Activated CD8-positive, alpha-beta T cell treated with anti-CD3 and anti-CD28 coated beads for 36 hours (primary cell): ENCODE measurements at regions of chr1 and their contacts with region 1.

Region 1: DNA sequence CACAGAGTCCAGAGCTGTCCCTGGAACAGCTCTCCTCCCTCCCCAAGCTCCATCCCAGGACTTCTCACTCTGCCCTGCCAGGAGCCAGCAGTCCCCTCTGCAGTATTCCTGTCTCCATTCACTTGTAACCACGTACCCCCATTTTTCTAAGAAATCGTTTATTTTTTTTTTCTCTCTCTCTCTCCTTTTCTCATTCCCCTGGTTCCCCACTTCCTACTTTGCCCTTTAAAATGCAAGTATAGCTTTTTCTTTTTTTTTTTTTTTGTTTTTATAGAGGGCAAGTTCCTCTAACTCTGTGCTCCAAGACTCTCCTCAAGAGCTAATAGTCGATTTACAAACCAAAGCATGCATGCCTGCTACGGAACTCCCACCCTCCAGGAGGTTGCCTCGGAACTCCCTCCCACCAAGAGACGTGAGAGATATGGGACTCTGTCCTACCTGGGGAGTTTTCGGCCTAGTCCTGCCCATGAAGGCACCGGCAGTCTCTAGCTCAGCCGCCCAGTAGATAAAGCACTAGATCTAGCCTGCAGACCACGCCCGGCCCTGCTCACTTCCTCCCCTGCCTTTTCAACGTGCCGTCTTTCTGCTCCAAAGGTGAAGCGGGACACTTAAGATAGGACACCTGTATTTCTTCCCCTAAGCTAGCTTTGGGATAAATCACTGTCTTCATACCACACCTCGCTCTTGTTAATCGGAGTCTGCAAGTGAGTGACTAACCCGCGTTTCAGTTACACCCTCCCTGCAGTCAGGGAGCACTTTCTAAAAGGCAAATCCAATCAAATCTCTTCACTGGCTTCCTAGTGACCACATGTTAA is 27.7 kb downstream of the TNFRSF9 start:
- DNase-seq: no peak
- ATAC-seq: peak; percentile 17
- H3K4me3 Mint-ChIP-seq: peak overlapping the region; percentile 56
- H3K27ac Mint-ChIP-seq: peak overlapping the region; percentile 66
- H3K4me1 Mint-ChIP-seq: peaks cover 42% of the 10 kb centered on the region
- H3K27me3 Mint-ChIP-seq: no peaks in the 10 kb centered on the region
- CTCF ChIP-seq: no peak

Region 2: DNA sequence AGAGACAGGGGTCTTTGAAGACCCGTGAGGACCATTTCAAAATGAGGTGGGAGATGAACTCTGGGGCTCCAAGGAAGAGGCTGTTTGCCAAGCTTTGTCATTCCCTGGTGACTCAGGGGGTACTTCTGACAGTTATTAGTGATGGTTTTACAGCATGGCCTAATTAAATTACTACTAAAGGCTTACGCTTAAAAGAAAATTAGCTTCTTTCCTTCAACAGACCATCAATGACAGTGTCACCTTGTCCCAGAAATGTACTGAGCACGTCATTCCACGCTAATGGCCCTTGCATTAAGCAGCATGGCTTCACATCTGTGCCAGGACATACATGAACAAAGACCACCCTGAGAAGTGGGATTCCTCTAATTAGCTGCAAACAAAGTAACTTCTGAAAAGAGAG is 55.0 kb before region 1 on chr1:
- CTCF ChIA-PET with region 1: no interaction called
- POLR2A ChIA-PET with region 1: no interaction called
- intact Hi-C with region 1: no loop called
- DNase-seq: no peak
- ATAC-seq: no peak
- H3K4me3 Mint-ChIP-seq: no peak overlapping the region
- H3K27ac Mint-ChIP-seq: no peak overlapping the region
- H3K4me1 Mint-ChIP-seq: peaks cover 2% of the 10 kb centered on the region
- H3K27me3 Mint-ChIP-seq: no peaks in the 10 kb centered on the region
- CTCF ChIP-seq: no peak

Region 3: GRCh38 chr1:7902478-7903085 is 10.4 kb before region 1 on chr1:
- CTCF ChIA-PET with region 1: interaction called, 23 read pairs
- POLR2A ChIA-PET with region 1: interaction called, 3 read pairs
- intact Hi-C with region 1: no loop called
- DNase-seq: peak; percentile 68
- ATAC-seq: peak; percentile 75
- H3K4me3 Mint-ChIP-seq: peak overlapping the region; percentile 38
- H3K27ac Mint-ChIP-seq: no peak overlapping the region
- H3K4me1 Mint-ChIP-seq: peaks cover 16% of the 10 kb centered on the region
- H3K27me3 Mint-ChIP-seq: no peaks in the 10 kb centered on the region
- CTCF ChIP-seq: peak; percentile 80

Region 4: DNA sequence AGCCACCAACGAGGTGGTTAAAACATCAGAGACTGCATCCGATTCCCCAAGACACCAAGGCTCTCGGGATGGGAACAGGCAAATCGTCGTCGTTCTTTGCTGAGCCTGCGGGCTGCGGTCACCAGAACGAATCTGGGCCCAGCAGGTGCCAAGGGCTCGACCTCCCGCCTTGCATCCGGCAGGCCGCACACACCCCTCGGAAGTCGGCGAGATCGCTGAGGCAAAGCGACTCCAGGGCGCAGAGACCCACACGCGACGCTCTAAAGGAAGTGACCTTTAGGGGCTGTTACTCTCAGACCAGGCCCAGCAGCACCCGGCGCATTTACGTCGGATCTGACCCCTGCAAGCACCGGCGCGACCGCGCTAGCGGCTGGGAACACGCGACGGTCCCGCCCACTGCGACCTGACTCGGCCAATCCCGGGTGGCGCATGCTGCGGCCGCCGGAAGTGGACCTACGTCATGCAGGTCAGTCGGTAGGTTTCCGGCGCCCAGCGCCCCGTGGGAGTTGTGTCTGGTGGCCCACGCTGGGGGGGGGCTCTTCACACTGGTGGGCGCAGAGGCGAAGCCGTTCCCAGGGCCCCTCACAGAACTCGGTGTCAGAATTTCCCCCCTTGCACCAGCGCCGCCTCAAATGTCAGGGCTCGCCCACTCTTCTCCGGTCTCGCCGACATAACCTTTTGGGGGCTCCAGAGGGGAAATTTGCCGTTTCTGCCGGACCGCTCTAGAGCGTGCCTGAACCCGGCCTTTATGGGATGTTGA is 41.1 kb after region 1 on chr1:
- CTCF ChIA-PET with region 1: interaction called, 6 read pairs
- POLR2A ChIA-PET with region 1: interaction called, 17 read pairs
- intact Hi-C with region 1: loop called (anchors 5 kb)
- DNase-seq: peak; percentile 97
- ATAC-seq: peak; percentile 77
- H3K4me3 Mint-ChIP-seq: peak overlapping the region; percentile 84
- H3K27ac Mint-ChIP-seq: peak overlapping the region; percentile 95
- H3K4me1 Mint-ChIP-seq: peaks cover 60% of the 10 kb centered on the region
- H3K27me3 Mint-ChIP-seq: no peaks in the 10 kb centered on the region
- CTCF ChIP-seq: no peak